HCT116 (cell line): ENCODE measurements at regions of chrX and their contacts with region 1.

Region 1: DNA sequence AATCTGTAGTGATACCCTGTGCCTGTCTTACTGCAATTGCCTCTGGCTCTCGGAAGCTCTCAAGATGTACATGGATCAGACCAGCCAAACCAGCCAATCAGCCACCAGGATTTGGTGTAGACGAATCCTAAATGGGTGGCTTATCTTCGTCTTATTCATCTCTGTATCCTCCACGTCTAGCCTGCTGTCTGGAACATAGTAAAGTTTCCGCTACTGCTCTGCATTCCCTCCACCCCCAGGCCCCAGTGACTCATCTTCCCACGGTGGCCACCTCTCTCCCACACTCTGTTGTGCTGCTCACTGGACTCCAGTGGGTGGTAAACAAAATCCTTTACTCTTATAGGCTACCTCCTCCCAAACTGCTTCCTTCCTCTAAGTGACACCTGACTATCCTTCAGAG is 37.8 kb downstream of the SEPTIN6 start:
- DNase-seq: no peak
- ATAC-seq: peak; percentile 44; the same call in 1 of the 2 replicates
- H3K4me3 ChIP-seq: no peak overlapping the region
- H3K27ac ChIP-seq: no peak overlapping the region
- H3K4me1 ChIP-seq: peaks cover 17 to 18% of the 10 kb centered on the region in 2 experiments
- H3K27me3 ChIP-seq: no peaks in the 10 kb centered on the region
- CTCF ChIP-seq: no peak
- POLR2A ChIP-seq: no peak
- RAD21 ChIP-seq: no peak

Region 2: DNA sequence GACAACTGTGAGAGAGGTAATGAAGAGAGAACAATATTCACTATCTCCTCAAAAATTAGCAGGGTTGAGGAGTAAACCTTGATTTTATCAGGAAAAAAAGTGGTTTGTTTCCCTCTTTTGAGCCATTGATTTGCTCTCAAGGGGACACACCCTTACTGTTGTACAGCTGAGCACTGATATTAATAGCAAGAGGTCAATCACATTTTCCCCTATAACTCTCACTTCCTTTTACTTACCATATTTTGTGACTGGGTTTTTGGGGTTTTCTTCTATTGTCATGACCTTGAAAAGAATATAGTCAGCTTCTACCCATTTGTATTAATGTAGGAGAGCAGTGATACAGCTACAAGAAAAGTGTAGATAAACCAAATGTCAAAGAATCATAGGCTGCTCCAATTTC is 750.9 kb before region 1 on chrX:
- CTCF ChIA-PET with region 1: no interaction called
- POLR2A ChIA-PET with region 1: no interaction called
- RAD21 ChIA-PET with region 1: no interaction called
- intact Hi-C with region 1: no loop called
- DNase-seq: no peak
- ATAC-seq: no peak
- H3K4me3 ChIP-seq: no peak overlapping the region
- H3K27ac ChIP-seq: no peak overlapping the region
- H3K4me1 ChIP-seq: no peaks in the 10 kb centered on the region
- H3K27me3 ChIP-seq: no peaks in the 10 kb centered on the region
- CTCF ChIP-seq: no peak
- POLR2A ChIP-seq: no peak
- RAD21 ChIP-seq: no peak

Region 3: GRCh38 chrX:119240356-119240755 is 414.8 kb before region 1 on chrX:
- CTCF ChIA-PET with region 1: no interaction called
- POLR2A ChIA-PET with region 1: no interaction called
- RAD21 ChIA-PET with region 1: no interaction called
- intact Hi-C with region 1: no loop called
- DNase-seq: no peak
- ATAC-seq: no peak
- H3K4me3 ChIP-seq: no peak overlapping the region
- H3K27ac ChIP-seq: no peak overlapping the region
- H3K4me1 ChIP-seq: peaks cover 0 to 12% of the 10 kb centered on the region in 2 experiments; a peak in 2 of 4 replicates
- H3K27me3 ChIP-seq: no peaks in the 10 kb centered on the region
- CTCF ChIP-seq: no peak
- POLR2A ChIP-seq: no peak
- RAD21 ChIP-seq: no peak

Region 4: DNA sequence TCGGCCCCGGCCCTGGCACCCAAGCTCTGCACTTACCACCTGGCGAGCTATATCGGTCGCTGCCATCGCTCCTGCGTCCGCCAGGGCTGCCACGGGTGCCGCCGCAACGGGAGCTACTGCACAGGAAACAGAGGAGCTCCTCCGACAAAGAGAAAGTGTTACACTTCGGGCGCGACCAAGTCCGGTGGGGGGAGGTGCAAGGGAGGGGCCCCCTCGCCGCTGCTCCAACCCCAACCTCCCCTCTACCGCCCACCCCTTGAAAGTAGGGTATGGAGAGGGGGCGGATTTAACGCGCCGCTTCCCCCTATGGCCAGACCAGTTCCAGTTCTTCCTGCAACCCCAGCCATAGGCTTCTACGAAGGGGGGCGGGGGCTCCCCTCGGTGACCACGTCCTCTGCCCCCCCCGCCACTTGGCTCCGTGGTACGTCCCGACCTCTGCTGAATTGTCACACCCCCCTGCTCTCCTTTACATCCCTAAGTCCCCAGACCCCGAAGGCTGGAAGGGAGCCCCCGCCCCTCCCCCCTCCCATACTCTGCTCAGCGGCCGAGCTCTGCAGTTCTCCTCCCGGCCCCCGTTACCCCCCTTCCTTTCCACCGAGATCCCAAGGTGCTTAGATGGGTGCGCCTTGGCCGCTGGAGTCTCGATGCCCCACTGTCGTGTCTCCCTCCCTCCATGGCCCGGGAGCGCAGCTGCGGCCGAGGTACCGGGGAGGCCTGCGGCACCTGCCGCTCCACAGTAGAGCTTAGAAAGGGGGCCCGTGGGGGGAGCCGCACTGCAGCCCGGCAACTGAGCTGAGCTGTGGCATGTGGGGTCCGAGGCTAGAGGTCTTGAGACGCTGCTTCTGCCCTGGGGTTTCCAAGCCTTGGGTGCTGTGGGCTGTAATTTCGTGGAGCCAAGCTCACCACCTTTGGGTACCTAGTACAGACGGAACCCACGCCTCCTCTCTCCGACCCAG is 38.2 kb after region 1 on chrX and contains the start of gene SEPTIN6:
- CTCF ChIA-PET with region 1: no interaction called
- POLR2A ChIA-PET with region 1: no interaction called
- RAD21 ChIA-PET with region 1: no interaction called
- intact Hi-C with region 1: loop called (anchors 5 kb)
- DNase-seq: peak; percentile 51
- ATAC-seq: peak; percentile 82
- H3K4me3 ChIP-seq: peak within 1 kb of the TSS; percentile 57 to 70
- H3K27ac ChIP-seq: peak within 1 kb of the TSS; percentile 65
- H3K4me1 ChIP-seq: peaks cover 0 to 11% of the 10 kb centered on the region in 2 experiments; a peak in 2 of 4 replicates
- H3K27me3 ChIP-seq: no peaks in the 10 kb centered on the region
- CTCF ChIP-seq: no peak
- POLR2A ChIP-seq: peak; percentile 51
- RAD21 ChIP-seq: no peak
- total RNA-seq, gene SEPTIN6: 10.8 TPM